GM10248 (cell line): ENCODE measurements at regions of chr9 and their contacts with region 1.

Region 1: GRCh38 chr9:130107234-130107861 is 53.6 kb downstream of the GPR107 start:
- DNase-seq: peak; percentile 76
- CTCF ChIP-seq: peak; percentile 71

Region 2: GRCh38 chr9:130092910-130093309 is 14.4 kb before region 1 on chr9:
- CTCF ChIA-PET with region 1: interaction called, 12 read pairs
- POLR2A ChIA-PET with region 1: no interaction called
- DNase-seq: no peak
- CTCF ChIP-seq: no peak

Region 3: DNA sequence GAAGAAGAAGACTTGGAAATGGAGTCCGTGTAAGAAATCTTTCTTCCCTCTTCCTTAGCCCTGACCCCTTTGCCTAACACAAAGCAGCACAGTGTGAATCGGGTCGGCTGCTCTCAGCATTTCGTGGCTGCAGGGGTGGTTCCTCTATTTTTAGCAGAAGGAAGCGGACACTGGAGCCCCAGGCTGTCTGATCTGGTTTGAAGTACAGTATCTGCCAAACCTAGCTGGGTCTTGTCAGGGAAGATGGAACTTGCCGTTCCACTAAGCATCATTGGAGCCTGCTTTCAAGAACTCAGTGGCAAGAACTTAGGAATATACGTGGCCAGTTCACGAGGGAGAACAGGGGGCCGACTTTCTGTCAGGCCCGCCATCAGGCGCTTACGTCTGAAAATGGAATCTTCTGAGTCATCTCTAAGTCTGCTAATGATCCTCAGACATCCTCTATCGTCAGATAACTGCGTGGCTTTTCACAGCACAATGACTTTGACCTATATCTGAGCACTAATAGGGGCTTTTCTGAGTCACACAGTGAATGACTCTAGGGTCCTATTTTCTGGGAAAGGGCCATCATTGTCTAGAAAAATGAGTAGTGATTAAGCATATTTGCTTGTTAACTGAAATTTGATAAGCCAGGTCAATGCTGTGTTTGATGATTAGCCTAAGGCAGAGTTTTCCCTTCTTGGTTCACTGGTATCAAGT is 21.5 kb after region 1 on chr9:
- CTCF ChIA-PET with region 1: interaction called, 13 read pairs
- POLR2A ChIA-PET with region 1: no interaction called
- DNase-seq: peak; percentile 74
- CTCF ChIP-seq: no peak